HEK293T (cell line): ENCODE measurements at regions of chr10 and their contacts with region 1.

Region 1: DNA sequence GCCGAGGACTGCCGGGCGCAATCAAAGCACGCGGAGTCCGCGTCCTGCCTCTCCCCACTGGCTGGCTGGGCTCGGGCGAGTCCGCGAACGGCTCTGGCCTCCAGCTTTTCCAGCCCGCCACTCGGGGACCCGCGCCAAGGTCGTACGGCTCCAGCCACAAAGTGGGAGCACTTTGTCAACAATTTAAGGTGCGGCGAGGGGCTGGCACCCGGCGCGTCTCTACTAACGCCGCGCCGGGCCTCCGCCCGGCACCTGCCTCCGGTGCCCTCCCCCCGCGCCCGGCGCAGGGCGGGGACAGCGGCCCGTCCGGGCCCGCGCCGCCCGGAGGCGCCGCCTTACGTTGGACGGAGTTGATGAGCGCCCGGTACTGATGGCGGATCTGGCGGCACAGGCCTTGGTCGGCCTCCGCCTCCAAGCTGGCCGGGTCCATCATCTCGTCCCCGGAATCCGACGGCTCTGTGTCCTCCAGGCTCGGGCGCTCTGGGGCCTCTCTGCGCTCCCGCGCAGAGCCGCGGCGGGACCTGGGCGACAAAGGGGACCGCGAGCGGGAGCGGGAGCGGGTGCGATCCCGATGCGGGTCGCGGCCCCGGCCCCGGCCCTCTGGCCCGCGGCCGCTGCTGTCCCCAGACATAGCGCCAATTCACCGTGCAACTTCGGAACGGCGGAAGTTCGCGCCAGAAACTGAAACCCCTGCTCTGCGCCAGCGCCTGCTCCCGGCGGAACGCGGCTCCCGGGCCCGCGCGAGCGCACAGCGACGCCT is at the start of gene NSMCE4A:
- DNase-seq: peak; percentile 94

Region 2: DNA sequence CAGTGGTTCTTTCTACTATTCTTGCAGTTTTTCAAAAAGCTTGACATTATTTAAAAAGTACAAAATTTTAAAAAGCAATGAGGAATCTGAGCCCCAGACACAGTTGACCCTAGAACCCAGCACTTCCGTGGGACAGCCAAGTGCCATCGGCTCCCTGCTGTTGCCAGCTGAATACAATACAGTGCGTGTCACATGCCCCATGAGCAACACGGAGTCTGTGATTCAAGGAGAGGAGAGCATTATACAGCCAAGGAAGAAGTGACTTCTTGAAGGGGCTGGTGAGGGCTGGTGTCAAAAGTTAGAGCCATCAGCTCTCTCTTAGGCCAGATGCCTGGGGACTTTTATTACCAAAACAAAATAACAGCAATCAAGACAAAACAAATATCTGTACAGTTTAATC is 253.5 kb before region 1 on chr10:
- CTCF ChIA-PET with region 1: no interaction called
- POLR2A ChIA-PET with region 1: no interaction called
- DNase-seq: no peak

Region 3: DNA sequence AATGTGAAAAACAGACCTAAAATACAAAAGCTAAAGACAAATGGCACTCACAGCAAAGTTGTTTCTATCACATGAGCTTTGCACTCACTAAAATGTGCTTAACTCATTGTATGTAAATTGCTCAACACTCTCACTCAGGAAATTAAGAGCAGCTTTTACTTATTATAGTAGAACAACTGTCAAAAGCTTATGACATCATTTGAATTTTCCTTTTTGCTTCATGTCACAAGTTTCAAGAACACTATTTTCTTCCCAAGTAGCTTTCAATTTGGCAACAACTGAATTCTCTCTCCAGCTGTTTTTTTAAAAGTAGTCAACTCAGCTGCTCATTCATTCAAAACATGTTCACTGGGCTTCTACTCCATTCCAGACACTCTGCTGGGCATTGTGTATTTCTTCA is 93.8 kb before region 1 on chr10:
- CTCF ChIA-PET with region 1: no interaction called
- POLR2A ChIA-PET with region 1: no interaction called
- DNase-seq: no peak

Region 4: GRCh38 chr10:121927841-121928527 is 46.7 kb before region 1 on chr10 and contains the start of gene ATE1:
- CTCF ChIA-PET with region 1: no interaction called
- POLR2A ChIA-PET with region 1: interaction called, 11 read pairs
- DNase-seq: peak; percentile 92